Activated CD4-positive, alpha-beta memory T cell treated with anti-CD3 and anti-CD28 coated beads, Interleukin-2, amount 10 ng/mL, durations not matched to agents 7 days and 5 days (primary cell): ENCODE measurements at regions of chr12 and their contacts with region 1.

Region 1: DNA sequence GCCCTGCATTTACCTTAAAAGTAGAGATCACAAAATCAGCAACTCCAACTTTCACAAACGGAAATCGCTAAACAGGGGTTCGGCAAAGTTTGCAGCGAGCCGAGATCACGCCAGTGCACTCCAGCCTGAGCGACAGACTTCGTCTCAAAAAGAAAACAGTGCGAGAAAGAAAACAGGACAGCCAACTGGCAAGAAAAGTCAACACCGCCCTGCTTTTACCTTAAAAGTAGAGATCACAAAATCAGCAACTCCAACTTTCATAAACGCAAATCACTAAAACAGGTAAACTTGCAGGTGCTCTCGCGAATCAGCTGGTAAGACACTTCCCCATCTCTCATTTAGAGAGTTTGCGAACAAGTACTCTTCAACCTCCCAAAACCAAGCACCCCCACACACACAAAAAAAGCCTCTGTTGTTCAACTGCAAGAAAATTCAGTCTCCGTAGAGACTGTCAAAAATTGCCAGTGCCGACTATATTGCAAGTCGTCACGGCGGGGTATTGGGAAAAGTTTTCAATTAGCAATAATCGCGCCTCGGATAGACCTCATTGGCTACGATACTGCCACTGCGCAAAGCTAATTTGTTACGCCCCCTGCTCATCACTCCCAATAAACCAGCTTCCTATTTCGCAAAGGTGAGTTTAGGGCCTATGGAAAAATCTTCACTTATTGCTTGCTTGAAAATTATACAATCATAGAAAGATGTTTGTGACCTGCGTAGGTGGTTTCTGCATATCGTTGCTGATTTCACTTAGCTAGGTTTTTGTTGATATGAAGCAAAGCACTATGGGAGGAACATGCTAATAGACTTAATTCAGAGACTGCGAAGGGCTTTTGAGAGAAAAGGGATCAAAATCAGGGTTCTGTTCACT is at the start of gene RNU4-1:
- DNase-seq: peak; percentile 84
- H3K4me3 Mint-ChIP-seq: no peak within 1 kb of the TSS
- H3K27ac Mint-ChIP-seq: no peak within 1 kb of the TSS
- H3K4me1 Mint-ChIP-seq: peaks cover 12% of the 10 kb centered on the region
- H3K27me3 Mint-ChIP-seq: peaks cover 7% of the 10 kb centered on the region
- total RNA-seq, gene RNU4-1: 1,910 to 2,156 TPM

Region 2: GRCh38 chr12:120064054-120064940 is 228.6 kb before region 1 on chr12:
- CTCF ChIA-PET with region 1: no interaction called
- POLR2A ChIA-PET with region 1: no interaction called
- DNase-seq: no peak
- H3K4me3 Mint-ChIP-seq: no peak overlapping the region
- H3K27ac Mint-ChIP-seq: no peak overlapping the region
- H3K4me1 Mint-ChIP-seq: no peaks in the 10 kb centered on the region
- H3K27me3 Mint-ChIP-seq: no peaks in the 10 kb centered on the region

Region 3: GRCh38 chr12:120086801-120087621 is 205.9 kb before region 1 on chr12:
- CTCF ChIA-PET with region 1: no interaction called
- POLR2A ChIA-PET with region 1: interaction called, 12 read pairs
- DNase-seq: peak; percentile 100
- H3K4me3 Mint-ChIP-seq: peak overlapping the region; percentile 67
- H3K27ac Mint-ChIP-seq: peak overlapping the region; percentile 83
- H3K4me1 Mint-ChIP-seq: peaks cover 47% of the 10 kb centered on the region
- H3K27me3 Mint-ChIP-seq: no peaks in the 10 kb centered on the region

Region 4: GRCh38 chr12:120216742-120217605 is 75.9 kb before region 1 on chr12:
- CTCF ChIA-PET with region 1: no interaction called
- POLR2A ChIA-PET with region 1: interaction called, 56 read pairs
- DNase-seq: no peak
- H3K4me3 Mint-ChIP-seq: no peak overlapping the region
- H3K27ac Mint-ChIP-seq: no peak overlapping the region
- H3K4me1 Mint-ChIP-seq: no peaks in the 10 kb centered on the region
- H3K27me3 Mint-ChIP-seq: no peaks in the 10 kb centered on the region

Region 5: GRCh38 chr12:120257041-120257821 is 35.7 kb before region 1 on chr12:
- CTCF ChIA-PET with region 1: interaction called, 5 read pairs
- POLR2A ChIA-PET with region 1: interaction called, 269 read pairs
- DNase-seq: no peak
- H3K4me3 Mint-ChIP-seq: no peak overlapping the region
- H3K27ac Mint-ChIP-seq: peak overlapping the region; percentile 67
- H3K4me1 Mint-ChIP-seq: peaks cover 91% of the 10 kb centered on the region
- H3K27me3 Mint-ChIP-seq: no peaks in the 10 kb centered on the region

Region 6: GRCh38 chr12:120327593-120327992 is 34.7 kb after region 1 on chr12 and contains the start of gene PLA2G1B:
- CTCF ChIA-PET with region 1: no interaction called
- POLR2A ChIA-PET with region 1: interaction called, 127 read pairs
- DNase-seq: no peak
- H3K4me3 Mint-ChIP-seq: no peak within 1 kb of the TSS
- H3K27ac Mint-ChIP-seq: no peak within 1 kb of the TSS
- H3K4me1 Mint-ChIP-seq: peaks cover 7% of the 10 kb centered on the region
- H3K27me3 Mint-ChIP-seq: peaks cover 3% of the 10 kb centered on the region
- total RNA-seq, gene PLA2G1B: not detected

Region 7: DNA sequence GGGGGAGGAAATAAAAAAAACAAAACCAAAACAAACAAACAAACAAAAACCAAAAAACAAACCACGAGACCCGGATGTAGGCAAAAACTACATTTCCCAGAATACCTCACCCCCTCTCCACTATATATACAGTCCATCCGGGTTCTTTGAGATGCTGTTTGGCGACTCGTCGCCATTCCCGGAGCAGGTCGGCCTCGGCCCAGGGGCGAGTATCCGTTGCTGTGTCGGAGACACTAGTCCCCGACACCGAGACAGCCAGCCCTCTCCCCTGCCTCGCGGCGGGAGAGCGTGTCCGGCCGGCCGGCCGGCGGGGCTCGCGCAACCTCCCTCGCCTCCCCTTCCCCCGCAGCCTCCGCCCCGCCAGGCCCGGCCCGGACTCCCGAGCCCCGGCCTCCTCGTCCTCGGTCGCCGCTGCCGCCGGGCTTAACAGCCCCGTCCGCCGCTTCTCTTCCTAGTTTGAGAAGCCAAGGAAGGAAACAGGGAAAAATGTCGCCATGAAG is 241.4 kb after region 1 on chr12 and contains the start of gene RNF10:
- CTCF ChIA-PET with region 1: no interaction called
- POLR2A ChIA-PET with region 1: interaction called, 19 read pairs
- DNase-seq: peak; percentile 78
- H3K4me3 Mint-ChIP-seq: peak within 1 kb of the TSS; percentile 88
- H3K27ac Mint-ChIP-seq: peak within 1 kb of the TSS; percentile 93
- H3K4me1 Mint-ChIP-seq: peaks cover 52% of the 10 kb centered on the region
- H3K27me3 Mint-ChIP-seq: no peaks in the 10 kb centered on the region
- total RNA-seq, gene RNF10: 225 to 229 TPM